Left cardiac atrium (tissue), 4 donors: ENCODE measurements at regions of chr11 and their contacts with region 1.

Region 1: GRCh38 chr11:102451681-102452460 is 694 bp downstream of the TMEM123 start:
- DNase-seq: peak; percentile 75
- ATAC-seq: peak; percentile 76 to 79

Region 2: GRCh38 chr11:102346748-102347461 is 105.0 kb before region 1 on chr11 and contains the start of gene BIRC2:
- intact Hi-C with region 1: loop called in 1 of 2 experiments (anchors 5 kb)
- DNase-seq: peak; percentile 97
- ATAC-seq: peak; percentile 98
- total RNA-seq, gene BIRC2: 30.4 to 34.2 TPM

Region 3: GRCh38 chr11:102401905-102402304 is 50.0 kb before region 1 on chr11:
- intact Hi-C with region 1: loop called in 1 of 2 experiments (anchors 5 kb)
- DNase-seq: no peak
- ATAC-seq: no peak